ENCODE measurements at regions of chr10 and their contacts with region 1.

Region 1: DNA sequence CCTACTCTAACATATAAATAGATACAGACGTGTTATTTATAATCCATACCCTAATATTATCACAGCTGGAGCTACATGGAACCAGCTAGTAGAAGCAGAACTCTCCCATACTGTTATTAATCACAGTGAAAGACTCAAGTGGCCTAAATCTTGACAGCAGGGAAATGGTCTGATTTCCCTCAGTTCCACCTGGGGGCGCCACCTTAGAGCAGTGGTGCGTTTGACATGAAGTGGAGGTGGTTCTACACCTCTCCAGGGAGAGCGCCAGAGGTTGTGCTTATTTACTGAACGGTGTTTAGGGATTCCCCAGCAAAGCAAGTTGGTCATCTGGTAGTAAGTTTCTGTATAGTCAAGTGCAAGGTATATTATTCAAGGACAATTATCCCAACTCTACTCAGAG is 17.6 kb downstream of the DNTT start:
- DNase-seq: no peak
- ATAC-seq: no peak
- H3K4me3 ChIP-seq: no peak overlapping the region
- H3K4me3 Mint-ChIP-seq: no peak overlapping the region
- H3K27ac ChIP-seq: no peak overlapping the region
- H3K27ac Mint-ChIP-seq: no peak overlapping the region
- H3K4me1 ChIP-seq: no peaks in the 10 kb centered on the region
- H3K4me1 Mint-ChIP-seq: no peaks in the 10 kb centered on the region
- H3K27me3 ChIP-seq: peaks cover 0 to 2% of the 10 kb centered on the region in 2 experiments
- H3K27me3 Mint-ChIP-seq: peaks cover 10 to 14% of the 10 kb centered on the region in 2 donors

Region 2: DNA sequence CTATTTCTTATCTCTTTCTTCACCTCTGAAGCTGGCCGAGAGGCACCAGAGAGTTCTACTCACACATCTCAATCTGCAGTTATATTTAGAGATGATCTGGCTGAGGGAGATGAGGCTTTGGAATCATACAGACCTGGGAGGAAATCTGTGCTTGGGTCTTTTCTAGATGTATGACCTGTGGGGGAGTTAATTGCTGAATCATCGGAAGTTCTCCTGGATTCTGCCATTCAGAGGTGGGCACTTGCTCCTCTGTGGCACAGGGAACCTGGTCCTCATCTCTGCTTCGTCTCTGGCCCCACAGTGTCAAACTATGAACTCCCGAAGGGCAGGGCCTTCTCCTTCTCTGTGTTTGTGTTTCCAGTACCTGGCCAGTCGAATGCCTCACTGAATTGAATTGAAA is 103.0 kb before region 1 on chr10:
- CTCF ChIA-PET with region 1: no interaction called
- POLR2A ChIA-PET with region 1: interaction called in 1 of 2 experiments, 16 read pairs
- DNase-seq: no peak
- ATAC-seq: no peak
- H3K4me3 ChIP-seq: no peak overlapping the region
- H3K4me3 Mint-ChIP-seq: no peak overlapping the region
- H3K27ac ChIP-seq: no peak overlapping the region
- H3K27ac Mint-ChIP-seq: no peak overlapping the region
- H3K4me1 ChIP-seq: no peaks in the 10 kb centered on the region
- H3K4me1 Mint-ChIP-seq: no peaks in the 10 kb centered on the region
- H3K27me3 ChIP-seq: peaks cover 0 to 19% of the 10 kb centered on the region in 2 experiments
- H3K27me3 Mint-ChIP-seq: peaks cover 13 to 20% of the 10 kb centered on the region in 2 donors